Mucosa of descending colon (tissue), 3 donors: ENCODE measurements at regions of chr16 and their contacts with region 1.

Region 1: DNA sequence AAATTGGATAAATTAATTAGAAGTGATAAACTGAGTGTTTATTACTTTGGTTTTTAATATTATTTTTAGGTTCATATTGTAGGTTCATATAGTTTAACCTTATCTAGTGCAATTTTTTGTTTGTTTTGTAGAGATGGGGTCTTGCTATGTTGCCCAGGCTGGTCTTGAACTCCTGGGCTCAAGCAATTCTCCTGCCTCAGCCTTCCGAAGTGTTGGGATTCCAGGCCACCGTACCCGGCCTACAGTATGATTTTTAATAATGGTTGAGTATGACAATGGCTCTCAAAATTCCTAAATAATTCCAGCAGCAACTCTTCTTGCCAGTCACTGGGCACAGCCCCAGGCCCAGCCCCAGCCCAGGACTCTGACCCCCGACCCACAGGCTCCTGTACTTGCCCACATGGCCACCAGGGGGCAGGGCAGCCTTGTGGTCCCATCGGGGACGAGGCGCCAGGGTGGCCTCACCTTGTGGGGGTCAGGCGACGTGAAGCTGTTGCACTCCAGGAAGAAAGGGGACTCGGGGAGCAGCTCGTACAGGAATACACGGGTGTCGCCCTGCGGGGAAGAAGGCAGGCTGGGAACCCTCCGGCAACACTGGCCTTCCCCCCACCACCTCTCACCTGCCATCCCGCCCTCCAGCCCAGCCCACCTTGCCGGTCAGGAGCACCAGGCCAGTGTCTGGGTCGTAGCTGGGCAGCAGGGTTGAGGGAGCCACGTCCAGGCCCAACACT is 7.9 kb upstream of the PAM16 start:
- DNase-seq: peak; percentile 66 to 73 (median 71)
- ATAC-seq: peak; percentile 68
- H3K4me3 ChIP-seq: no peak overlapping the region
- H3K4me1 ChIP-seq: no peaks in the 10 kb centered on the region
- CTCF ChIP-seq: peak; percentile 85

Region 2: DNA sequence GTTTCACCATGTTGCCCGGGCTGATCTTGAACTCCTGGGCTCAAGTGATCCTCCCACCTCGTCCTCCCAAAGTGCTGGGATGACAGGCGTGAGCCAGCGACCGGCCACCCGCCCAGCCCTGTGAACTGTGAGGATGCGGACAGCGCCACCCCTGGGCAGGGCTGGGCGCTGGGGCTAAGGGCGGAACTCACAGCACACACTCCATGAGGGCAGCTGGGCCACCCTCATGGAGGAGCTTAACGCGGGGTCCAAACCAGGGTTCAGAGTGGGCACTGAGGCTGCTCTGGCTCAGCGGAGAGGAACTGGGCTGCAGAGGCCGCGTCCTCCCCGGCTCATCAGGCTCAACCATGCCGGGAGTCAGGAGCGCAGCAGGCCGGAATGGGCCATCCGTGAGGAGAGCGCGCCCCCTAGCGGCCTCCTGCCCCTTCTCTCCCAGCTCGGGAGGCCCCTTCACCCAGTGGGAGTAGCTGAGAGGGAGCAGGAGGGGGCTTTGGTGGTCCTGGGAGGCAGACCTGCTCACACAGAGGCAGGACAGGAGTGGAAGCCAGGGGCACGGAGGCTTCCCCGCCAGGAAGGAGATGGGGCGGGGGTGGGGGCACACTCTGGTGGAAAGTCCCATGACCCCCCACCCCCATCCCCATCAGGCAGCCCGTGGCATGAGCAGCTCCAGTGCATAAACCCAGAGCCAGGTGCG is 43.6 kb after region 1 on chr16:
- intact Hi-C with region 1: loop called (anchors 5 kb)
- DNase-seq: peak; percentile 80 to 89 (median 87)
- ATAC-seq: peak; percentile 94
- H3K4me3 ChIP-seq: no peak overlapping the region
- H3K4me1 ChIP-seq: no peaks in the 10 kb centered on the region
- CTCF ChIP-seq: peak; percentile 80

Region 3: DNA sequence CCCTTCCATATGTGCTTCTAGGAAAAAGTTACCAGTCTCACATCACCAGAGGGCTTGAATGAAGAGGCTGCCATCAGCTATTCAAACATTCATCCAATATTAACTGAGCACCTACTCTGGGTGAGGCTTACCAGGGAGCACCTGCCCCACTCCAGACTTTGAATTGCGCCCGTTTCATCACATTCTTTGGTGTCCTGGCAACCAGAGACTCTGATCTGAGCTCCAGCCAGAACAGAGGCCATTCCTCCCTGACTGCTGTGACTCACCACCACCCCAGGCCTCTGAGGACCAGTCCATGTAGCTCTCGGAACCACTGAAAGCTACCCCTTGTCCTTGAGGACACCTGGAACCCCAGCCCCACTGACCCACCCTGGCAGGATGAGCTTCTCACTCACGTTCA is 197.1 kb after region 1 on chr16 and contains the start of gene C16orf96:
- intact Hi-C with region 1: no loop called
- DNase-seq: no peak
- ATAC-seq: no peak
- H3K4me3 ChIP-seq: no peak within 1 kb of the TSS
- H3K4me1 ChIP-seq: no peaks in the 10 kb centered on the region
- CTCF ChIP-seq: no peak
- total RNA-seq, gene C16orf96: not detected